Activated naive CD4-positive, alpha-beta T cell treated with anti-CD3 and anti-CD28 coated beads for 36 hours (primary cell): ENCODE measurements at regions of chr18 and their contacts with region 1.

Region 1: DNA sequence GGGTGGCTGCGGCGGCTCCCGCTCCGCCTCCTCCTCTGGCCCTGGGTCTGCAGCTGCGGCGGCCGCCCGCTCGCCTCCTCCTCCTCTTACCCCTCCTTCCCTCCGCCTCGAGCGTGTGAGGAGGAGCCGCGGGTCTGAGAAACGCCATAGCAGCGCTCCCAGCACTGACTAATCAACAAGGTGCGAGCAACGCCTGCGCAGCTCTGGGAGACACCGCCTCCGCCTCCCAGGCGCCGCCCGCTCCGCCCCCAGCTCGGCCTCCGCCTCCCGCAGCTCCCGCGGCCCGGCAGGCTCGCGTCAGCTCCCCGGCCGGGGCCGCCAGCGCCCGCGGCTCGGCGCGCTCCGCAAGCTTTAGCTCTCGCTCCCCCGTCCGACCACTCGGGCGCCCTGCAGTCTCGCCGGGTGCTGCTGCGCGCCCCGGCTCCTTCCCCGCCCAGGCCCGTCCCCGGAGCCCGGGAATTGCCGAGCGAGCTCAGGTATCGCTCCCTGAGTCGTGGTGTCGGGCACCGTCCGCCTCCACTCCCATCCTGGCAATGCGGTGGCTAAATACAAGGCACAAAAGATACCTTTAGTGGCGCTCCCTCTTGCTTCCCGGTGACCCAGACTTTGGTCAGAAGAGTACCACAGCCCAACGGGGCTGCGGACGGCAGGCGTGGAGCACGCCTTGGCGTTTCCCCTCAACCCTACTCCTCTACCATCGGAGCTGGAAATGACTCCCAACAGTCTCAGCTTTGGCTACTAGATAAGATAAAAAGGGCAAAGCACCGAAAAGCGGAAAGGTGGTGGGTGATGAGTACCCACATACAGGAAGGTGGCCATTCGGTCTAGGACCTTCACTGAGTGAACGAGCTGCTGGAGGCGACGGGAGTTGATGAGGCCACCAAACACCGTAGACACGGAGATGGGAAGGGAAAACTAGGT is at the start of gene GAREM1:
- DNase-seq: peak; percentile 91
- H3K4me3 Mint-ChIP-seq: peak within 1 kb of the TSS; percentile 77
- H3K27ac Mint-ChIP-seq: no peak within 1 kb of the TSS
- H3K4me1 Mint-ChIP-seq: peaks cover 28% of the 10 kb centered on the region
- H3K27me3 Mint-ChIP-seq: peaks cover 36% of the 10 kb centered on the region
- total RNA-seq, gene GAREM1: 0.31 to 0.35 TPM

Region 2: DNA sequence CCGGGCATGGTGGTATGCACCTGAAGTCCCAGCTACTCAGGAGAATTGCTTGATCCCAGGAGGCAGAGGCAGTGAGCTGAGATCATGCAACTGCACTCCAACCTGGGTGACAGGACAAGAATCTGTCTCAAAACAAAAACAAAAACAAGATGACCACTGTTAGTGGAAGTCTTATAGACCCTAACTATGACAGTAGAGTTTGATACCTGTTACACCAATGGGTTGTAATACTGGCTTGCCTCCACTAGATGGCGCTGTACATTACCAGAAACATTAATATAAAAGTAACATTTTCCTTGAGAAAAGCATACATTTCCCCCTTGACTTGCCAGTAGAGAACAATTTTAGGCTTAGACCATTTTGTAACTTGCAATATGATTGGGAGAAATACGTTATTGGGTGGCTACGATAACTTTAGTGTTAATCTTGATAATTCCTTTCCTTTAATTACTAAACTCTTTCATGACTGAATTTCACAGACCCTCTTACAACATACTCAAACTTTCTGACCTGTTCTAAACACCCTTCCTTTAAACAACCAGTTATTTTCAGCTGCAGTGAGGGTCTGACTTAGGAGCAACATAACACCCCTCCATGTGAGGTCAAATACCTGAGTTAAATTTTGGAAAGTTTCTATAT is 729.8 kb before region 1 on chr18:
- CTCF ChIA-PET with region 1: no interaction called
- intact Hi-C with region 1: loop called (anchors 5 kb)
- DNase-seq: peak; percentile 78
- H3K4me3 Mint-ChIP-seq: no peak overlapping the region
- H3K27ac Mint-ChIP-seq: no peak overlapping the region
- H3K4me1 Mint-ChIP-seq: no peaks in the 10 kb centered on the region
- H3K27me3 Mint-ChIP-seq: no peaks in the 10 kb centered on the region

Region 3: GRCh38 chr18:32271672-32272208 is 199.2 kb before region 1 on chr18:
- CTCF ChIA-PET with region 1: interaction called, 17 read pairs
- intact Hi-C with region 1: loop called (anchors 1 kb)
- DNase-seq: peak; percentile 44
- H3K4me3 Mint-ChIP-seq: no peak overlapping the region
- H3K27ac Mint-ChIP-seq: no peak overlapping the region
- H3K4me1 Mint-ChIP-seq: no peaks in the 10 kb centered on the region
- H3K27me3 Mint-ChIP-seq: peaks cover 11% of the 10 kb centered on the region

Region 4: DNA sequence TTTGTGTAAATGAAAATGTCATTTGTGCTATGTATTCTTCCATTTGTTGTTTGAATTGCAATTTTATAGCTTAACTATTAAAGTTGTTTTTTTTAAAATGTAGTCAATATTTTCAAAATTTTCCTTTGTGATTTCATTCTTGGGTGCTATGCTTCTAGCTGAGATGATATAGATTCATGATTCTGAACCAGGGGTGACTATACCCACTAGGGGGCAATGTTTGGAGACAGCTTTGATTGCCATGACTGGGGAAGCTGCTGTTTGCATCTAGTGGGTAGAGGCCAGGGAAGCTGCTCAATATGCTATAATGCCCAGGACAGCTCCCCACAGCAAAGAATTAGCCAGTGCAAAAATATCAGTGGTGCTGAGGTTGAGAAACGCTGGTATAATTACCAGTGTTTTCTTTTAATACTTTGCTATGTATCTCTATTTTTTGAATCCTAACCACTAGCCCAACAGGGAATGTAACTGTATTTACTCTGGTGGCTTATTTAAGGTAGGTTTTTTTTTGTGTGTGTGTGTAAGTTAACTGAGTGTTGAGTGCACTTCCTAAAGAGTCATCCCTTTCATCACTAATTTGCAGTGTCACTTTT is 181.4 kb before region 1 on chr18:
- CTCF ChIA-PET with region 1: interaction called, 23 read pairs
- intact Hi-C with region 1: loop called (anchors 1 kb)
- DNase-seq: peak; percentile 64
- H3K4me3 Mint-ChIP-seq: no peak overlapping the region
- H3K27ac Mint-ChIP-seq: no peak overlapping the region
- H3K4me1 Mint-ChIP-seq: no peaks in the 10 kb centered on the region
- H3K27me3 Mint-ChIP-seq: peaks cover 9% of the 10 kb centered on the region

Region 5: DNA sequence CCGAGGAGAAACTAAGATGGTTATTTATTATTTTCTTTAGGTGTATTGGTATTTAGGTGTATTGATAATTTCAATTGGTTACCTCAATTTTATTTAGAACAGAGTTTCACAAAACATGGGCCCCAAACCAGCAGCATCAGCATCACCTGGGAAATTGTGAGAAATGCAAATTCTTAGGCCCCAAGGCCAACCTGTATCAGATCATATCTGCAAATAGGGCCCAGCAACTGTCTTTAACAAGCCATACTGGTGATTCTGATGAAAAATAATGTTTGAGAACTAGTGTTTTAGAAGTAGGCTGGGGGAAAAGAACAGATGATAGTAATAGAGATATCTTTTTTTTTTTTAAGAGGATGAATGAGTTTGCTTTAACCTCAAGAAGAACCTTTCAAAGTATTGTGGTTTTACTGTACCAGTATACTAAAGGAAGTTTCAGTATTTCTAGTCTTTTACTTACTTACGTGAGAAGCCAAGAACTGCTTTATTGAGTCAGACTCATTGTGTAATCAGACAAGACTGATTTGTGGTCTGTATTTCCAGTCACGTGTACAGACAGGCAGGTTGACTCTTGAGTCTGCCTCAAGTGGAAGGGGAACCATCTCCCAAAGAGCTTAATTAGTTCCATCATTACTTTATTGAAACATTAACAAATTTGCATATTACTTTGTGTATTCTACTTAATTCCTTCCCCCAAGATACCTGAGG is 60.1 kb after region 1 on chr18:
- CTCF ChIA-PET with region 1: interaction called, 5 read pairs
- intact Hi-C with region 1: loop called (anchors 1 kb)
- DNase-seq: peak; percentile 40
- H3K4me3 Mint-ChIP-seq: no peak overlapping the region
- H3K27ac Mint-ChIP-seq: peak overlapping the region; percentile 9
- H3K4me1 Mint-ChIP-seq: peaks cover 17% of the 10 kb centered on the region
- H3K27me3 Mint-ChIP-seq: peaks cover 13% of the 10 kb centered on the region

Region 6: DNA sequence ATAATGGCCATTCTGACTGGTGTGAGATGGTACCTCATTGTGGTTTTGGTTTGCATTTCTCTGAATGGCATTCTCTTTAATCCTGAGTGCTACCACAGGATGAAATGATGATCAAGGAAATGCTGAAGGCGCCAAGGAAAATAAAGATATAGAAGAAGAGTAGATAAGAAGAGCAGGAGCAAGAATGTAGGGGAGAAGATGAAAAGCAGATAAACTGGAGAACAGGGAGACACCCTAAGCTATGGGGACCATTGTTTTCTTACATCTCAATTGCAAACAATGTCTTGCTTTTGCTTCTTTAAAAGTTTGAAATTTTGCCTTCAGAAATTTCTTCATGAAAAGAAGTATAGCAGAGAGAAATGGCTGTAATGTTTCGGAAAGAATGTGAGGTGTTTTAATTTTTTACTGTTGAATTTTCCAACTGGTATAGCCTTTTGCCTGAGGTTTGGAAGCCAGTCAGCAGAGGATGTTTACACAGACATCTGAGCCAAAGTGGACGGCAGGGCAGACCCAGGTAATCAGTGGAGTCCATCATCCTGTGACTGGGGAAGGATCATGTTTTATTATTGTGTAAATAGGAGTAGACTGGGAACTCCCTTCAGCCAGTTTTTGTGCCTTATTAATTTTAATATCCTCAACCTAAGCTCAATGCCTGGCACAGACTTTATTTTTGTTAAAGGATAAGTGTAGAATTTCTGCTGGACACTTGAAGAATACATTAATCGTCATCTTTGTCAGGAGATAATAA is 141.5 kb after region 1 on chr18:
- CTCF ChIA-PET with region 1: no interaction called
- intact Hi-C with region 1: no loop called
- DNase-seq: no peak
- H3K4me3 Mint-ChIP-seq: no peak overlapping the region
- H3K27ac Mint-ChIP-seq: no peak overlapping the region
- H3K4me1 Mint-ChIP-seq: no peaks in the 10 kb centered on the region
- H3K27me3 Mint-ChIP-seq: peaks cover 9% of the 10 kb centered on the region